HepG2 (cell line): ENCODE measurements at regions of chr16 and their contacts with region 1.

Region 1: DNA sequence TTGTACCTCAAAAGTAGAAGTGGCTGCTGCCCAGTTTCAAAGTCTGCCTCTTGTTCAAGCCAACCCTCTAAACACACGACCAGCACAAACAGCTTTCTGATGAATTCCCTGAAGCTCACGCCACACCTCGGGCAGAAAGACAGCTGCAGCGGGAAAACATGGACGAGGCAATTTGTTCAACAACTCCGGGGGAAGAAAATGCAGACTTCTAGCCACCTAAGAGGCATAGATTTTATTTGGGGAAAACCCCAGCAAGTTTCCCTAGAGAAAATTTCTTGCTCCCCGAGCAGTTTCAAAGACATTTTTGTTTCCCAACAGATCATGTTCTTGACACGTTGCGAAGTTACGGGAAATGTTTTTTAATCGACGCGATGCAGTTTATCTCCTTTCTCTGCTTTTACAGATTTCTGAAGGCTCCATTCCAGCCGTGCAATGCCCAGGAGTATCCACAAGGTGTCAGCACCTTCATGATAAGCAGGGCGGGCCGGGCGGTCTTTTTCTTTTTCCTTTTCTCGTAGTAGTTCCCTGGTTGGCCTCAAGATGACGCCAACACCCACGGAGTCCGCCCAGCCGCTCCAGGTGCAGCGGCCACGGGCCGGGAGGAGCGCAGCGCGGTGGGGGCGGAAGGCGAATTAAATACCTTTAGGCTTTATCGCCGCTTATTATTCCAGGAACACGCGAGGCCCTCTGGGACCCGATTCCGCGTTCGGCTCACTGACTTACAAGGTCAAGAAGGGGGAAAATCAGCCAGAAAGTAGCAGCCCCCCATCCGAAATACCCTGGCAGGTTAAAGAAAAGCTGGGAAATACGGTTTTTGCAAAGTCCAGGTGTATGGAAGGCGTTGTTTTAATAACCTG is 2.9 kb upstream of the FOXC2 start:
- DNase-seq: peak; percentile 81
- ATAC-seq: peak; percentile 83
- H3K4me3 ChIP-seq: no peak overlapping the region
- H3K27ac ChIP-seq: no peak overlapping the region
- H3K4me1 ChIP-seq: no peaks in the 10 kb centered on the region
- H3K27me3 ChIP-seq: peaks cover 11 to 48% of the 10 kb centered on the region in 2 experiments
- CTCF ChIP-seq: peak; percentile 99
- EP300 ChIP-seq: no peak
- POLR2A ChIP-seq: no peak
- RAD21 ChIP-seq: peak; percentile 100

Region 2: DNA sequence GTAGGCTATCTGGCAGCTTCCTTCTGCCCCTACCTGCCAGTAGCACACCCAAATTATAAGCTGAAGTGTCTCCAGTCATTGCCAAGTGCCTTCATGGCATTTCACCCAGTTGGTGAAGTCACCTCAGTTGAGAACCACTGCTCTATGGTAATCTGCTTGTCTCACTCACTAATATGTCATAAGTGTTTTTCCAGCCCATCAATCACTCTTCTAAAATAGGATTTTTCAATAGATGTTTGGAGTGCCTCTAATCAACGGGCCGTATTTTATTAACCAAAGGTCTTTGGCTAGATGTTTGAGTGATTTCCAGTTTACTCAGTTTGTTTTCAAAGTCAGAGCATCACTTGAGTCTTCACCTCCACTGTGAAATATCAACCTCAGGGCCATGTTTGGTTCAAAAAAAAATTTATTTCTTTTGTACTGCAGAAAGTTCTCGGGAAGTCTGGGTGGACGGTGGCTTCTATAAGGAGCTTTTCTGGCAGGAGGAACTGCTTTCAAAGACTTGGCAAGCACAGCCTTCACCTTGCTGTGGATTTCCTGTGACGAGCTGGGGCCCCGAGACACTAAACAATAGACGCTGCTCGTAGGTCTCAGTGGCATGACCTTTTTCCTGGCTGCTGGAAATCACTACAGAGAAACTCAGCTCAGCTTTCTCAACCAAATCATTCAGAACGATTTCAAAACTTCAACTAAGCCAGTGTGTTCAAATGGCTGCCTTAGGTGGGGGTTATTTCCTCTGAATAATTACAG is 148.6 kb before region 1 on chr16:
- CTCF ChIA-PET with region 1: no interaction called
- POLR2A ChIA-PET with region 1: no interaction called
- in situ Hi-C with region 1: no loop called
- intact Hi-C with region 1: no loop called
- DNase-seq: no peak
- ATAC-seq: no peak
- H3K4me3 ChIP-seq: no peak overlapping the region
- H3K27ac ChIP-seq: no peak overlapping the region
- H3K4me1 ChIP-seq: no peaks in the 10 kb centered on the region
- H3K27me3 ChIP-seq: peaks cover 0 to 12% of the 10 kb centered on the region in 2 experiments; a peak in 2 of 5 replicates
- CTCF ChIP-seq: no peak
- EP300 ChIP-seq: no peak
- POLR2A ChIP-seq: no peak
- RAD21 ChIP-seq: no peak

Region 3: DNA sequence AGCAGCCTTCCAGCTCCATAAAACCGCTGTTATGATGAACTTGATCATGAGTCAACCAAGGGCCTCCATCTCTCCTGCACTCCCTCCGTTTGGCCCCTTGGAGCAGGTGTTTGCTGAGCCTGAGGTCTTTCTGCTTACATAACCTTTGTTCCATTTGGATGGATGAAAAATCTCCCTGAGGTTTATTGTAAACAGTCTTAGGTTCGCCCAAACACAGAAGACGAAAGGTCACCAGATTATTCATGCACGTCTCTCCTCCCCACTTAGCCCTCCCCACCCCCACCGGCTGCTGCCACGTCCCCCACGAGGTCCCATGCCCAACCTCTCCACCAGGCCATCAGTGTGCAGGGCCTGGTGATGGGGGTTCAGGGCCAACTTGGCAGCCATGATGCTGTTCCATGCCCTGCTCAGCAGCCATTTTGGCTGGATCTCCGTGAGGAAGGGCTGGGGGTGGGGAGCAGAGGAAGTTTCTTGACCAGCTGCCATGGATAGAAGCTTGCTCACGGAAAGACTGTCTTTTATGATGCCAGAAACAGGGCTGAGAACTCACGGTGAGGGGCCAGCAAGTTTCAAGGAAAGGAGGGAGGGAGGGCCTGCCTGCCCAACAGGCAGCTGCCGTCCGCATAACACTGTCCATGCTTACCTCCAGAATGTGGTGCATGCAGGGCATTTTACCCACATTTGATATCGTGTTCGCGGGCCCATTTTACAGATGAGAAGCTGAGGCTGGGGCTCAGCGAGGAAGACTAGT is 101.2 kb before region 1 on chr16:
- CTCF ChIA-PET with region 1: no interaction called
- POLR2A ChIA-PET with region 1: no interaction called
- in situ Hi-C with region 1: no loop called
- intact Hi-C with region 1: no loop called
- DNase-seq: no peak
- ATAC-seq: no peak
- H3K4me3 ChIP-seq: no peak overlapping the region
- H3K27ac ChIP-seq: no peak overlapping the region
- H3K4me1 ChIP-seq: no peaks in the 10 kb centered on the region; the same call in 1 of the 2 replicates
- H3K27me3 ChIP-seq: peaks cover 2 to 22% of the 10 kb centered on the region in 2 experiments; a peak in 3 of 5 replicates
- CTCF ChIP-seq: no peak
- EP300 ChIP-seq: no peak
- POLR2A ChIP-seq: no peak
- RAD21 ChIP-seq: no peak

Region 4: DNA sequence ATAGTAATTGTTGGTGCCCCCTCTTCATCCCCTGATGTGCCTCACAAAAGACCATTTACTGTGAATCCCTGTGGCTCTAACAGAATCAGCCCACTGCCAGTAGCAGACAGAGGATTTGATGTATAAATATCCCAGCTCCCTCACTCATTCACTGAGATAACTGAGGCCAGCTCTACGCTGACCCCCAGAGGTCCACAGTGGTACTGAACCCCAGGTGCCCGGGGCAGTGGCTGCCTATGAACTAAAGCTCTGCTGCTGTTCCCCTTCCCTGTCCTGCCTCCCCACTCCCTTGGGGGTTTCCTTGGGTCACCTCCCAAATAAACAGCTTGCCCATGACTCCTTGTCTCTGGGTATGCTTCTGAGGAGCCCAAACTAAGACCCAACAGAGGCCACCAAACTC is 310.4 kb after region 1 on chr16:
- CTCF ChIA-PET with region 1: interaction called, 27 read pairs
- POLR2A ChIA-PET with region 1: no interaction called
- in situ Hi-C with region 1: loop called (anchors 10 kb)
- intact Hi-C with region 1: loop called (anchors 1 kb)
- DNase-seq: no peak
- ATAC-seq: peak; percentile 82
- H3K4me3 ChIP-seq: no peak overlapping the region
- H3K27ac ChIP-seq: no peak overlapping the region
- H3K4me1 ChIP-seq: no peaks in the 10 kb centered on the region
- H3K27me3 ChIP-seq: peaks cover 7 to 49% of the 10 kb centered on the region in 2 experiments; a peak in 4 of 5 replicates
- CTCF ChIP-seq: peak; percentile 68
- EP300 ChIP-seq: no peak
- POLR2A ChIP-seq: no peak
- RAD21 ChIP-seq: 0 out of 2 replicates have a peak, but pooled peaks have one; percentile 34

Region 5: DNA sequence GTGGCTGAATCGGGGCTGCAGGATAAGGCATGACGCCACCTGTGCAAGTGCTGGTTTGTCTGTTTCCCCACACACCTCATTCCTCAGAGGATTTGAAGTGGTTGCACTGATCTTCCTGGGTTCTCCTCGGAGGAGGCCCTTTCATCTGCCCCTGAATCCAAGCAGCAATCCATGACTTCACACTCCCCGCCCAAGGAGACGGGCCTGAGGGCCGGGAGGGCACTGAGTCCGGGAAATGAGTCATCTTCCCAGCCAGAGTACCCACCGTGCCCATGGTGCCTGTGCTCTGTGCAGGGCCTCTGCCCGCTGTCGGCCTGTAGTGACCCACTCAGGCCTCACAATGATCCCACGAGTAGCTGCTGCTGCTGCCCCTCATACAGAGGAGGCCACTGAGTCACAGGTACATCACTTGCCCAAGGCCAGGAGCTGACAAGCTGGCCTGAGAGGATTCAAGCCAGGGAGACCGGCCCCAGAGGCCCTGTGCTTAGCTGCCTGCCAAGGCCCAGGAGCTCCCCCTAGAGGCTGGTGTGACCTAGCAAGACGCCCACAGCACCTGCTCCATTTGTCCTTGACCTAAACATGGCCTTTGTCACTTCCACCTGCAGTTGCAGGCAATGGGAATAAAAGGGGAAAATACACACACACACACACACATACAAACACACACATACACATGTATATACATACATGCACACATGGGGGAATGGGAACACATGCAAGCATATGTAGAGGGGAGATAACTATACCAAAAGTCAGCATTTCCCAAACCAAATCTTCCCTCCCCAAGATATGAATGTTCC is 513.4 kb after region 1 on chr16:
- CTCF ChIA-PET with region 1: interaction called, 15 read pairs
- POLR2A ChIA-PET with region 1: no interaction called
- in situ Hi-C with region 1: no loop called
- intact Hi-C with region 1: no loop called
- DNase-seq: peak; percentile 63
- ATAC-seq: peak; percentile 96
- H3K4me3 ChIP-seq: no peak overlapping the region
- H3K27ac ChIP-seq: no peak overlapping the region
- H3K4me1 ChIP-seq: no peaks in the 10 kb centered on the region
- H3K27me3 ChIP-seq: peaks cover 0 to 8% of the 10 kb centered on the region in 2 experiments; a peak in 1 of 5 replicates
- CTCF ChIP-seq: peak; percentile 85
- EP300 ChIP-seq: no peak
- POLR2A ChIP-seq: no peak
- RAD21 ChIP-seq: peak; percentile 44

Region 6: GRCh38 chr16:87203060-87203656 is 639.4 kb after region 1 on chr16:
- CTCF ChIA-PET with region 1: interaction called, 10 read pairs
- POLR2A ChIA-PET with region 1: no interaction called
- in situ Hi-C with region 1: loop called (anchors 10 kb)
- intact Hi-C with region 1: no loop called
- DNase-seq: peak; percentile 69
- ATAC-seq: peak; percentile 96
- H3K4me3 ChIP-seq: no peak overlapping the region
- H3K27ac ChIP-seq: no peak overlapping the region
- H3K4me1 ChIP-seq: 0 out of 2 replicates have a peak, but pooled peaks cover 18% of the 10 kb centered on the region
- H3K27me3 ChIP-seq: no peaks in the 10 kb centered on the region; a peak in 1 of 5 replicates
- CTCF ChIP-seq: peak; percentile 97
- EP300 ChIP-seq: no peak
- POLR2A ChIP-seq: no peak
- RAD21 ChIP-seq: peak; percentile 86

Region 7: GRCh38 chr16:87297918-87298631 is 734.4 kb after region 1 on chr16:
- CTCF ChIA-PET with region 1: interaction called, 5 read pairs
- POLR2A ChIA-PET with region 1: no interaction called
- in situ Hi-C with region 1: no loop called
- intact Hi-C with region 1: loop called (anchors 5 kb)
- DNase-seq: peak; percentile 54
- ATAC-seq: peak; percentile 75
- H3K4me3 ChIP-seq: no peak overlapping the region
- H3K27ac ChIP-seq: no peak overlapping the region
- H3K4me1 ChIP-seq: peaks cover 25% of the 10 kb centered on the region
- H3K27me3 ChIP-seq: no peaks in the 10 kb centered on the region
- CTCF ChIP-seq: peak; percentile 78
- EP300 ChIP-seq: no peak
- POLR2A ChIP-seq: no peak
- RAD21 ChIP-seq: no peak; the same call in 1 of the 2 replicates